HepG2 (cell line): ENCODE measurements at regions of chr6 and their contacts with region 1.

Region 1: DNA sequence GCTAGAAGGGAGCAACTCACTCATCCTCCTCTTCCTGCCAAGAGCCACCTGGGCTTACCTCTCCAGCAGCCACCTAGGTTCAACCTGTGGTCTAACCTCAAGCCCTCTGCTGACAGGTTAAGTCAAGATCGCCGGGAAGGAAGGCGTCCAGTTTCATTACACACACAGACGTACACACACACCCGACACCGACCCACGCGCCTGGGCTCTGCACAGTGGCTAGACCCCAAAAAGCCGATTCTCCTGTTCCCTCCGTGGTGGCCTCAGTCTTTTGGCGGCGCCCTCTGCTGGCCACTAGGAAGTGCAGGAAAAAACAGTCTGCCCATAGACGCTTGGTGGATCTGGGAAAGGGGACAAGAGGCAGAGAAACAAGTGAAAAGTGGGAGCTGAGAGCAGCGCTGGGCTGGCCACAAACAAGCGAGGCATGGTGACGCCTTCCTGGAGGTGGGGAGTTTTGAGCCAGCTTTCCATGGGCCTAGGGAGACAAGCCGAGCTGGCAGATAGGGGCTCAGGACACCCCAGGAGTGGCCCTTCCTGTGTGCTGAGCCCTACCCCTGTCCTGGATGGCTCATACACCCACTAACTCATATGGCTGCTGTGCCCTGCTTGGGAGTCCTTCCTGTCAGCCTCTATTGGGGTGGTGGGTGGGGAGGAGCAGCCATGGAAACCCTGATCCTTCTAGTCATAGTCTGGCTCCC is 52.7 kb downstream of the MRPL14 start:
- DNase-seq: peak; percentile 78
- ATAC-seq: peak; percentile 64
- H3K4me3 ChIP-seq: peak overlapping the region; percentile 23 to 74 (median 46)
- H3K27ac ChIP-seq: peak overlapping the region; percentile 57
- H3K4me1 ChIP-seq: peaks cover 85% of the 10 kb centered on the region
- H3K27me3 ChIP-seq: no peaks in the 10 kb centered on the region
- CTCF ChIP-seq: peak; percentile 99
- EP300 ChIP-seq: no peak
- POLR2A ChIP-seq: no peak
- RAD21 ChIP-seq: peak; percentile 85

Region 2: GRCh38 chr6:43608310-43608763 is 466.3 kb before region 1 on chr6:
- CTCF ChIA-PET with region 1: interaction called, 17 read pairs
- POLR2A ChIA-PET with region 1: interaction called, 3 read pairs
- in situ Hi-C with region 1: no loop called
- intact Hi-C with region 1: loop called (anchors 1 kb)
- DNase-seq: peak; percentile 68
- ATAC-seq: peak; percentile 89
- H3K4me3 ChIP-seq: no peak overlapping the region
- H3K27ac ChIP-seq: no peak overlapping the region
- H3K4me1 ChIP-seq: no peaks in the 10 kb centered on the region
- H3K27me3 ChIP-seq: no peaks in the 10 kb centered on the region
- CTCF ChIP-seq: peak; percentile 90
- EP300 ChIP-seq: no peak
- POLR2A ChIP-seq: no peak
- RAD21 ChIP-seq: peak; percentile 54

Region 3: DNA sequence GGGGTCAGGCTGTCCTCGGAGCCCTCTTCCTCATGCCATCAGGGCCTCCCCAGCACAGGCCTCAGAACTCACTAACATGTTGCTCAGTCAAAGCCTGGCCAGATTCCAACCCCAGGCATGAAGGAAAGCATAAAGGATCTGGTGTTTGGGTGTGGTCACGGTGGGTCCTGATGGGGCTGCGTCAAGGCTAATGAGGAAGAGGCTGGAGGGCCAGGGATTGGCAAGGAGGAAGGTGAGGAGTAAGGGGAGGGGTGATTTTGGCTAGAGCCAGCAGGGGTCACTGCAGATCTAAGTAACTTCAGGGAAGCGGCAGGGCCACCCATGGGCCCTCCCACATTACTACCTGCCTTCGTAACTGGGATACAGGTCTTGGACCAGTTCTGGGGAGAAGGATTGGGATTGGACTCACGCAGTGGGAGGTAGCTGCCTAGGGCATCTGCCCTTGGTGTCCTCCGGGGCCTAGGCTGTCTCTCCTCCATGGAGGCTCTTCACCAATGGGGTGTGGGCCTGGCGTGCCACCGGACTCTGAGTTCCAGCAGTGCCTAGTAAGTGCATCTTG is 350.8 kb before region 1 on chr6:
- CTCF ChIA-PET with region 1: interaction called, 22 read pairs
- POLR2A ChIA-PET with region 1: interaction called, 7 read pairs
- in situ Hi-C with region 1: loop called (anchors 5 kb)
- intact Hi-C with region 1: loop called (anchors 1 kb)
- DNase-seq: peak; percentile 84
- ATAC-seq: peak; percentile 91
- H3K4me3 ChIP-seq: no peak overlapping the region; a peak in 1 of 6 replicates
- H3K27ac ChIP-seq: no peak overlapping the region
- H3K4me1 ChIP-seq: peaks cover 50% of the 10 kb centered on the region
- H3K27me3 ChIP-seq: peaks cover 0 to 5% of the 10 kb centered on the region in 2 experiments; a peak in 2 of 5 replicates
- CTCF ChIP-seq: peak; percentile 98
- EP300 ChIP-seq: no peak
- POLR2A ChIP-seq: no peak
- RAD21 ChIP-seq: peak; percentile 95

Region 4: DNA sequence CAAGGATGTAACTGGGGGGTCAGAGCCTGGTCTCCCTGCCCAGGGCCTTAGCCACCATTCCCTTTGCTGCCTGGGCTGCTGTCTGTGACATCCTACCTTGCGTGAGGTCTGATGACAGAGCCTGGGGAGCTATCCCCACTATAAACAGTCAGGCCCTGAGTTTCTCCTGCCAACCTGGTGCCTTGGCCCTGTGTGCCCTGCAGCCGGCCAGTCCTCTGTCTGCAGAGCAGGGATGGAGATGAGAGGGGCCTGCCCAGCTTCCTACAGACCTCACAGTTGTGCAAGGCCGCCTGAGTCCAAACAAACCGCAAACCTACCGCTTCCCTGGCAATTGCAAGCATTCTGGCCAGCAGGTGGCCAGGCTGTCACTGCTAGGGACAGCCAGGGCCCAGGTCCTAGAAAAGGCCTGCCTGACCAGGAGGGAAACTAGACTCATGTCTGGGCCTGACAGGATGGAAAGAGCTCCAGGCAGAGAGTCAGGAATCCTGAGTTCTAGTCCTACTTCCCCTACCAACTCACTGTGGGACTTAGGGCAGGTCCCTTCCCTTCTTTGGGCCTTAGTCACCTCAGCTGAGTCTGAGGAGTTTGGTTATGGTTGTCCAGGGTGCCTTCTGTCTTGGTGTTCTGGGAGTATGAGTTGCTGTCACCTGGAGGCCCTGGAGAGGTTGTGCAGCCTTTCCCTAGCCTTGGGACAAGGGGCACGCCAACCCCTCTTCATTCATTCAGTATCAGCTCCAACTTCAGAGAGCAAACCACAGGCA is 218.4 kb before region 1 on chr6:
- CTCF ChIA-PET with region 1: interaction called, 8 read pairs
- POLR2A ChIA-PET with region 1: no interaction called
- in situ Hi-C with region 1: loop called (anchors 5 kb)
- intact Hi-C with region 1: loop called (anchors 2 kb)
- DNase-seq: peak; percentile 86
- ATAC-seq: peak; percentile 91
- H3K4me3 ChIP-seq: no peak overlapping the region
- H3K27ac ChIP-seq: no peak overlapping the region
- H3K4me1 ChIP-seq: peaks cover 85% of the 10 kb centered on the region
- H3K27me3 ChIP-seq: peaks cover 3 to 4% of the 10 kb centered on the region in 2 experiments; a peak in 1 of 5 replicates
- CTCF ChIP-seq: peak; percentile 99
- EP300 ChIP-seq: peak in 1 of 2 experiments; percentile 20; a peak in 1 of 4 replicates
- POLR2A ChIP-seq: no peak
- RAD21 ChIP-seq: peak; percentile 96

Region 5: GRCh38 chr6:44002593-44003344 is 71.8 kb before region 1 on chr6:
- CTCF ChIA-PET with region 1: interaction called, 4 read pairs
- POLR2A ChIA-PET with region 1: no interaction called
- in situ Hi-C with region 1: no loop called
- intact Hi-C with region 1: loop called (anchors 5 kb)
- DNase-seq: no peak
- ATAC-seq: no peak
- H3K4me3 ChIP-seq: peak overlapping the region in 1 of 3 experiments; percentile 51; a peak in 1 of 6 replicates
- H3K27ac ChIP-seq: no peak overlapping the region
- H3K4me1 ChIP-seq: peaks cover 89% of the 10 kb centered on the region
- H3K27me3 ChIP-seq: peaks cover 0 to 7% of the 10 kb centered on the region in 2 experiments; a peak in 2 of 5 replicates
- CTCF ChIP-seq: no peak
- EP300 ChIP-seq: no peak
- POLR2A ChIP-seq: no peak
- RAD21 ChIP-seq: no peak

Region 6: DNA sequence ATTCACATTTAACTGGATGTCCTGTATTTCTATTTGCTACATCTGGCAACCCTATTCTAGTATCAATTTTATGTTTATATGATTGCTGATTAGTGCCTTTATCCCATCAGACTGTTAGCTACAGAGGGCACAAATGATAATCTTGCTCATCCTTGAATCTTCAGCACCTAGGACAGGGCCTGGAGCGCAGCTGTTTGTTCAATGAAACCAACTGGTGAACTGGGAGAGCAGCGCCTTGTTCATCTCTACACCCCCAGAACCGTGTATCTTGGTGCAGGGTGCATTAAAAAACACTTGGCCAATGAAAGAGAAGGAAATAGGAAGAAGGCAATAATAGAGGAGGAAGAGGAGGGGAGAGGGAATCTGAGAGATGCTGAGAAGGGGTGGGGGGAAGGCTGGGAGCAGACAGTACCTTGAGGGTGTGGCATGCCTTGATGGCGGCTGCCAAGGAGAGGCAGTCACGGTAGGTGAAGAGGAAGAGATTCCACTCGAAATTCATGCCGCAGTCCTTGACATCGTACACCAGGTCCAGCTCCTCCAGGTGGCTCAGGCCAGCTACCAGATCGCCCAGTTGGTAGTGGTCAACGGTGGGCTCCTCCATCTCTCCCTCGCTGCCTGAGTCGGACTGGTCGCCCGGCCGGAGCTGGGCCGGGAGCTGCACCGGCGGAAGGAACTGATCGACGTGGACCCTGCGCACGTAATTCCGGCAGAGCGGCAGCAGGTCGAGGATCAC is 211.1 kb after region 1 on chr6:
- CTCF ChIA-PET with region 1: no interaction called
- POLR2A ChIA-PET with region 1: no interaction called
- in situ Hi-C with region 1: no loop called
- intact Hi-C with region 1: no loop called
- DNase-seq: no peak
- ATAC-seq: peak; percentile 36; the same call in 2 of the 3 replicates
- H3K4me3 ChIP-seq: no peak overlapping the region
- H3K27ac ChIP-seq: no peak overlapping the region
- H3K4me1 ChIP-seq: no peaks in the 10 kb centered on the region
- H3K27me3 ChIP-seq: peaks cover 1 to 75% of the 10 kb centered on the region in 2 experiments
- CTCF ChIP-seq: no peak
- EP300 ChIP-seq: no peak
- POLR2A ChIP-seq: no peak
- RAD21 ChIP-seq: no peak